ENCODE measurements at regions of chr9 and their contacts with region 1.

Region 1: GRCh38 chr9:97398999-97399758 is 12.7 kb upstream of the TDRD7 start:
- DNase-seq: peak; percentile 80
- H3K4me3 Mint-ChIP-seq: no peak overlapping the region
- H3K27ac Mint-ChIP-seq: no peak overlapping the region
- H3K4me1 Mint-ChIP-seq: peaks cover 17% of the 10 kb centered on the region
- H3K27me3 Mint-ChIP-seq: peaks cover 5% of the 10 kb centered on the region

Region 2: GRCh38 chr9:97237951-97238851 is 161.0 kb before region 1 on chr9:
- CTCF ChIA-PET with region 1: interaction called, 3 read pairs
- POLR2A ChIA-PET with region 1: no interaction called
- intact Hi-C with region 1: loop called (anchors 5 kb)
- DNase-seq: peak; percentile 88
- H3K4me3 Mint-ChIP-seq: peak overlapping the region; percentile 95
- H3K27ac Mint-ChIP-seq: peak overlapping the region; percentile 91
- H3K4me1 Mint-ChIP-seq: peaks cover 16% of the 10 kb centered on the region
- H3K27me3 Mint-ChIP-seq: no peaks in the 10 kb centered on the region

Region 3: DNA sequence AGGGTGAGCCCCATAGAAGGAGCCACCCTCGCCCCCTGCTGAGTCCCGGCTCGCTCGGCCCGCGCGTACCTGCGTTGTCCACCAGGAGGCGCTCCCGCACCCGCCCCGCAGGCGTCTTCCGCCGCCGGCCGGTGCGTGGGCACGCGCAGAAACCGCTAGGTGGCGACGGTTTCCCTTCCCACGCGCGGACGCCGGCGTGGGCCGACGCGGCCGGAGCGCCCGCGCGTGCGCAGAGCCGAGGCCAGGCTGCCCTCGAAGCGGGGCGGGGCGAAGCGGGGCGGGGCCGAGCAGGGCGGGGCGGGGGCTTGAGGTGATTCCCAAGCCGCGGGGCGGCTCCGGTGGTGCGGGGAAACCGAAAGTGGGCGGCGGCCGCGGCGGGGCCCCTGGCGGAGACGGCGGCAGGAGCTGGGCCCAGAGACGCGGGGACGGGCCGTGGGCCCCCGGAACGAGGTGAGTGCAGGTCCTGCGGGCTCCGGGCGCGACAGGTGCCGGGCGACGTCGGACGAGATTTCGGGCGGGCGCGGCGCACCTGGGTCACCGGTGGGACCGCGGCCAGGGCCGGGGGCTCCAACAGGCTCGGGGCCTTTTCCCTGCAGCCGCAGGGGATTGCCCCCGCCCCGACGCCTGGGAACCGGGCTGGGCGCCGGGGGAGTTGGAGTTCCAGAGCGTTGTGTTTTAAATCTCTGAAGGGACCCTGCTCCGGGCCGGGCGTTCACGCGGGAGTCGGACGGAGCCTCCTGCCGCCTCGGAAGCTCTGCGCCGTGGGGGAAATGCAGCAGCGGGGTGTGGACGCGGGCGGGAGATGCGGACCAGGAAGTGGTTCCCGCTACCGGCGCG is 12.8 kb after region 1 on chr9 and contains the start of gene TDRD7:
- CTCF ChIA-PET with region 1: interaction called, 10 read pairs
- POLR2A ChIA-PET with region 1: no interaction called
- intact Hi-C with region 1: no loop called
- DNase-seq: peak; percentile 92
- H3K4me3 Mint-ChIP-seq: peak within 1 kb of the TSS; percentile 82
- H3K27ac Mint-ChIP-seq: peak within 1 kb of the TSS; percentile 61
- H3K4me1 Mint-ChIP-seq: peaks cover 23% of the 10 kb centered on the region
- H3K27me3 Mint-ChIP-seq: peaks cover 11% of the 10 kb centered on the region
- total RNA-seq, gene TDRD7: 12.3 to 12.5 TPM

Region 4: DNA sequence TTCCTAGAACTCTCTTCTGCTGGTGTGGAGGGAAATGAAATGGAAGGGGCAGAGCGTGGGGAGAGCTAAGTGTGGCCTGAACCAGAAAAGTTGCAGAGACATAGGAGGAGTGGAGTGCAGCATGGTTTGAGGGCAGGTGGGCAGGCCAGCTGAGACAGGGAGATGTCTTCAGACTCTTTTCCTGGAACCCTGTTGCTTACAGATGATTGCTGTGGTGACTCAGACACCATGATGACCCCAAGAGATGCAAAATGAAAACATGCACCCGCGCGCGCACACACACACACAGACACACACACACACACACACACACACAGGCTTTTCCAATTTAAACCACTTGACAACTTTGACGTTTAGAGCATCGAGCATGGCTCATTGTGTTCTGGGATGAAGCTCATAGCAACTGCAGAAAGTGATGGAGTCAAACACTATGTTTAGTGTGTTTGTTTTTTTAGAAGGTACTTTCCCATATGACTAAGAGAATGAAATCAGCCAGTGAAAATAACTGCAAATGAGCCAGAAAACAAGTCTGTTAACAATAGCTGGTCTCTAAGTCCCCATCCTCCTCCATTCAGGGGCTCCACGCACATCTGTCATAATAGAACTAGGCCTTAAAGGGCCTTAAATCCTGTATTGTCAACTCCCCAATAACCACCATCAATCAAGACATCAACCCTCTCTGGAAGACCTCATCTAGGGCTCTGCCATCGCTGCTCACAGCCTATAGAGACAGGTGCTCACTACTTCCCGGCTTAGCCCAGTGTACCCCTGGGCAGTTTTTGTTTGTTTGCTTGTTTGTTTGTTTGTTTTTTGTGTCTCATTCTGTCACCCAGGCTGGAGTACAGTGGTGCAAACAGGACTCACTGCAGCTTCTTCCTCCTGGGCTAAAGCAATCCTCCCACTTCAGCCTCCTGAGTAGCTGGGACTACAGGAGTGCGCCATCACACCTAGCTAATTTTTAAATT is 111.9 kb after region 1 on chr9:
- CTCF ChIA-PET with region 1: no interaction called
- POLR2A ChIA-PET with region 1: no interaction called
- intact Hi-C with region 1: loop called (anchors 1 kb)
- DNase-seq: peak; percentile 46
- H3K4me3 Mint-ChIP-seq: no peak overlapping the region
- H3K27ac Mint-ChIP-seq: peak overlapping the region; percentile 16
- H3K4me1 Mint-ChIP-seq: peaks cover 14% of the 10 kb centered on the region
- H3K27me3 Mint-ChIP-seq: peaks cover 2% of the 10 kb centered on the region

Region 5: GRCh38 chr9:97528529-97529230 is 129.5 kb after region 1 on chr9:
- CTCF ChIA-PET with region 1: no interaction called
- POLR2A ChIA-PET with region 1: no interaction called
- intact Hi-C with region 1: no loop called
- DNase-seq: no peak
- H3K4me3 Mint-ChIP-seq: no peak overlapping the region
- H3K27ac Mint-ChIP-seq: no peak overlapping the region
- H3K4me1 Mint-ChIP-seq: peaks cover 11% of the 10 kb centered on the region
- H3K27me3 Mint-ChIP-seq: peaks cover 3% of the 10 kb centered on the region

Measured in activated CD4-positive, alpha-beta memory T cell treated with anti-CD3 and anti-CD28 coated beads for 36 hours (primary cell).